Caco-2 (cell line): ENCODE measurements at regions of chr10 and their contacts with region 1.

Region 1: DNA sequence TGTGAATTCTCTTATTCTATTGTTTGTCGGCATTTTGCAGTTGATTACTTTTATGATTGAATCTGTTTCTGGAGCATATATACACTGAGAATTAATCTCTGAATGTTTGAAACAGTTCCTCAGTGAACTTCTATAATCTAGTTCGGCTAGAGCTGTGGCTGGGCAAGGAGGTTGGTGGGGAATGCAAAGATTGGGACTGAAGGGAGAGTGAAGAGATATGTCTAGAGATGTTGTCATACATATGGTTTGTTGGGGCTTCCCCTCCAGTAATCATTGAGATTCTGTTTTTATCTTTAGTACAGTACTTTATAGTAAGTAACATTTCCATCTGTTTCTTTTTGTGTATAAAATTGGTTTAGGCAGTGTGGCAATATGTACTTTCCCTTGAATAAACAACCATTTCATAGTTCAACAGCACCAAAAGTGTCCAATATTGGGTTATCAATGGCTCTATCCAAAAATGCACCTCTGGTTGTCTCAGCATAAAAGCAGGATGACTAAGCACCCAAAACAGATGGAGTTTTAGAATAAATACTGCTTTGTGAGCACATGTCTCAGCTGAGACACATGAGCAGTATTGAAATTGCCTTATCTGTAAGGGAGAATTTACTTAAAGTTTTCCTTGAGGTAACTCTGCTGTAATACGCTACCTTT is 36.7 kb downstream of the WAC start:
- DNase-seq: peak in 1 of 2 experiments; percentile 27
- H3K4me3 ChIP-seq: no peak overlapping the region
- H3K4me3 Mint-ChIP-seq: no peak overlapping the region
- H3K27ac Mint-ChIP-seq: no peak overlapping the region
- H3K4me1 ChIP-seq: peaks cover 44% of the 10 kb centered on the region
- H3K4me1 Mint-ChIP-seq: peaks cover 29% of the 10 kb centered on the region
- H3K27me3 ChIP-seq: no peaks in the 10 kb centered on the region
- H3K27me3 Mint-ChIP-seq: no peaks in the 10 kb centered on the region
- CTCF ChIP-seq: no peak

Region 2: DNA sequence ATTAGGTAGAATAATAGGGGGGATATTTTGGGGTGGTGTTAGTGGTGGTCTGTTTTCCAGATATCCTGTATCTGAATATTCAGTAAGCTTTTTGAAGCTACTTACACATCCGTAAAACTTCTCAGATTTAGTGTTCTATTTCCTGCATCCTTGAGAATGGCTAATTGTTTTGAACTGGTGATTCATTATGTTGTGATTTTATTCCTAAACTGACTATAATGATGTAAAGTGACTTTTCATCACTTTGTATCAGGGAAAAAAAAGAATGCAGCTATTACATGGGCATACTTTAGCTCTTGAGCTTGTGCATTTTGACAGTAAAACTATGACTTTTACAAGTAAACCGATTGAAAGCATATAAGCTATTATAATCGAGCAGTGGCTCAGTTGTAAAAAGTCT is 18.5 kb before region 1 on chr10:
- CTCF ChIA-PET with region 1: no interaction called
- POLR2A ChIA-PET with region 1: no interaction called
- intact Hi-C with region 1: loop called (anchors 2 kb)
- DNase-seq: no peak
- H3K4me3 ChIP-seq: no peak overlapping the region
- H3K4me3 Mint-ChIP-seq: no peak overlapping the region
- H3K27ac Mint-ChIP-seq: no peak overlapping the region
- H3K4me1 ChIP-seq: peaks cover 12% of the 10 kb centered on the region; the same call in 1 of the 2 replicates
- H3K4me1 Mint-ChIP-seq: peaks cover 57% of the 10 kb centered on the region
- H3K27me3 ChIP-seq: no peaks in the 10 kb centered on the region
- H3K27me3 Mint-ChIP-seq: no peaks in the 10 kb centered on the region
- CTCF ChIP-seq: no peak